Activated CD4-positive, alpha-beta memory T cell treated with anti-CD3 and anti-CD28 coated beads for 36 hours (primary cell): ENCODE measurements at regions of chr12 and their contacts with region 1.

Region 1: GRCh38 chr12:107079172-107080011 is 14.0 kb downstream of the CRY1 start:
- DNase-seq: no peak
- H3K4me3 Mint-ChIP-seq: no peak overlapping the region
- H3K27ac Mint-ChIP-seq: no peak overlapping the region
- H3K4me1 Mint-ChIP-seq: peaks cover 7% of the 10 kb centered on the region
- H3K27me3 Mint-ChIP-seq: no peaks in the 10 kb centered on the region

Region 2: DNA sequence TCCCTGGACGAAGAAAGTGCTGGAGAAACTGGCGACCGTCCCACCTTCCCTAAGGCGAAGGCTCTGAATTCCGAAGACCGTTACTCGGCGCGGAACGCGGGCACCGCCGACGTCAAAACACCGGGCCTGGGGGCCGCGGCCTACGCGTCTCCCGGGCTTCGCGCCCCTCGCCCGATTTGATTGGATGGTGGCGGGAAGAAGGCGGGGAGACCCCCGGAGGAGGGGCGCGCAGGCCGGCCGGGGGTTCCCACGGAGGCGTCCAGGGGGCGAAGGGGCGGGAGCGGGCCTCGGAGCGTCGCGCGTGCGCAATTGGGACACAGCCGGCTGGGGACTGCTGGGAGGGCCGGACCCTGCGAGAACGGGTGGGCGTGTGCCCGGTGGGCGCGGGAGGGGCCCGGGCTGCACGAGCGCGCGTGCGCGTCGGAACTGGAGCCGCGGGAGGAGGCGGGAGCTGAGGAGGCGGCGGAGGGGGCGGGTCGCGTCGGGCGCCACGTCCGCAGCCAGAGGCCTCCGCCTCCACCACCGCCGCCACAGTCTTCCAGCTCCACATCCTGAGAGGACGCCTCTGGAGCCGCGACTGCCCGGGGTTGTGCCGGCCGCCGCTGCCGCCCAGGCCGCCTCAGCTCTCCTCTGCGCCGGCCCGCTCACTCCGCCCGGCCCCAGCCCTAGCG is 123.9 kb before region 1 on chr12 and contains the start of gene TMEM263:
- CTCF ChIA-PET with region 1: no interaction called
- POLR2A ChIA-PET with region 1: no interaction called
- intact Hi-C with region 1: no loop called
- DNase-seq: peak; percentile 94
- H3K4me3 Mint-ChIP-seq: peak within 1 kb of the TSS; percentile 96
- H3K27ac Mint-ChIP-seq: peak within 1 kb of the TSS; percentile 86
- H3K4me1 Mint-ChIP-seq: peaks cover 16% of the 10 kb centered on the region
- H3K27me3 Mint-ChIP-seq: no peaks in the 10 kb centered on the region
- total RNA-seq, gene TMEM263: 37.8 to 38.3 TPM

Region 3: DNA sequence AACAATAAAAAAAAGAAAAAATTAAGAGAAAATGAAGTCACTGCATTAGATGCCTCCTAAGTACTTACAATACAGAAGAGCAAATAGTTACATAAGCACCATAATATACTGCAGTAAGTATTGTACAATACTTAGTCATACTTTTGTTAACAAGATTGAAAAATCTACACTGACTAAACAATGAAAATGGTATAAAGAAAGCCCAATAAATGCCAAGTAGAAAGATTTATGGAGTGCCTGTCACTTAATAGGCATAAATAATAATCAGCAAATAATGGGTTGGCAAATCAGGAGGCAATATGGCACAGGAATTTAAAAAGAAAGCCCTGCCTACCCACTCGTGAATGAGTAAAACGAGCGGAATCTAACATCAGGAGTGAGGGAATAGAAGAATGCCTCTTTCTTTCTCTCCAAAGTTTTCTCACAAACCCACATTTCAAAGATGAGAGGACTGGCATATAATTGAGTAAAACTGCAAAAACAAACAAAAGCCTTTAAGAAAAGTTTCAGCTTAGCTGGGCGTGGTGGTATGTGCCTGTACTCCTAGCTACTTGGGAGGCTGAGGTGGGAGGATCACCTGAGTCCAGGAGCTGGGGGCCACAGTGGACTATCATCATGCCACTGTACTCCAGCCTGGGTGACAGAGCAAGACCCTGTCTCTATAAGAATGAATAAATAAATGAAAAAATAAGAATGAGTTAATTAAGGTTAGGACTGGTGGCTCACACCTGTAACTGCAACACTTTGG is 22.1 kb before region 1 on chr12:
- CTCF ChIA-PET with region 1: interaction called, 10 read pairs
- POLR2A ChIA-PET with region 1: no interaction called
- intact Hi-C with region 1: no loop called
- DNase-seq: no peak
- H3K4me3 Mint-ChIP-seq: no peak overlapping the region
- H3K27ac Mint-ChIP-seq: no peak overlapping the region
- H3K4me1 Mint-ChIP-seq: peaks cover 7% of the 10 kb centered on the region
- H3K27me3 Mint-ChIP-seq: no peaks in the 10 kb centered on the region